ENCODE measurements at regions of chr1 and their contacts with region 1.

Region 1: DNA sequence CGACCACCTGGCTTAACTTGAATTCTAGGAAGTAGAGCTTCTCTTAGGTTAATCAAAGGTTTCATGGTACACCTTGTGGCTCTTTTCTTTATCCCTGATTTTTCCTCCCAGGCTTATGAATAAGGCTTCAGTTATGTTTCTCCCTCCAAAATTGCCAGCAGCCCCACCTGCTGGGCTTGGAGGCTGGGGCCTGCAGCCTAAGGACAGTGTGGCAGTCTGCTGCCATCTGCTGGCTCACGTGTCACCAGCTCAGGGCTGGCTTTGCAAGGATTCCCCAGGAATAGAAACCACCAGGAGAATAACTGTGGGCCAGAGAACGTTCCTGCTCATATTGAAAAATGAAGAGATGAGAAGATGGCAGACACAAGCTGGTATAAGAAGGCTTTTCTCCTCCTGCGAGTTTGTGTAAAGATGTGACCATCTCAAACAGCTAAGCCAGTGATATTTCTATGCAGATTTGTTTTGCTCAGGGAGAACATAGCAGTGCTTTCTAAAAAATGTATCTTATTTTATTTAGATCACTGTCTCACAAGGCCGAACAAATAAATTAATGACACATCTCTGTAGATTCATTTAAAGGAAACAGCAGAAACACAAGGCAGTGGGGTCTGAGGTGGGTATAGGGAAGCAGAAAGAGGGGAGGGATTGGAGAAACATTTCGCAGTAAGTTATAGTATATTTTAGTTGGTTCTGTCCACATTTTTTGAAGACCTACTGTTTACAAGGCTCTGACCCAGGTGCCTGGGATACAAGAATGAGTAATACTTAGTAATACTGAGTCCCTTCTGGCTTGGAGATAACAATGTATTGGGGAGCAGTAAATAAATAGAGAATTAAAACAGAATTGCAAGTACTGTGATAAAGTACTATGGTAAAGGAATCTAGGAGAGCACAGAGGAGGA is 291.1 kb upstream of the SGIP1 start:
- DNase-seq: peak; percentile 89
- ATAC-seq: peak; percentile 41
- H3K4me3 Mint-ChIP-seq: no peak overlapping the region
- H3K27ac Mint-ChIP-seq: no peak overlapping the region
- H3K4me1 Mint-ChIP-seq: no peaks in the 10 kb centered on the region
- H3K27me3 Mint-ChIP-seq: peaks cover 5% of the 10 kb centered on the region

Region 2: DNA sequence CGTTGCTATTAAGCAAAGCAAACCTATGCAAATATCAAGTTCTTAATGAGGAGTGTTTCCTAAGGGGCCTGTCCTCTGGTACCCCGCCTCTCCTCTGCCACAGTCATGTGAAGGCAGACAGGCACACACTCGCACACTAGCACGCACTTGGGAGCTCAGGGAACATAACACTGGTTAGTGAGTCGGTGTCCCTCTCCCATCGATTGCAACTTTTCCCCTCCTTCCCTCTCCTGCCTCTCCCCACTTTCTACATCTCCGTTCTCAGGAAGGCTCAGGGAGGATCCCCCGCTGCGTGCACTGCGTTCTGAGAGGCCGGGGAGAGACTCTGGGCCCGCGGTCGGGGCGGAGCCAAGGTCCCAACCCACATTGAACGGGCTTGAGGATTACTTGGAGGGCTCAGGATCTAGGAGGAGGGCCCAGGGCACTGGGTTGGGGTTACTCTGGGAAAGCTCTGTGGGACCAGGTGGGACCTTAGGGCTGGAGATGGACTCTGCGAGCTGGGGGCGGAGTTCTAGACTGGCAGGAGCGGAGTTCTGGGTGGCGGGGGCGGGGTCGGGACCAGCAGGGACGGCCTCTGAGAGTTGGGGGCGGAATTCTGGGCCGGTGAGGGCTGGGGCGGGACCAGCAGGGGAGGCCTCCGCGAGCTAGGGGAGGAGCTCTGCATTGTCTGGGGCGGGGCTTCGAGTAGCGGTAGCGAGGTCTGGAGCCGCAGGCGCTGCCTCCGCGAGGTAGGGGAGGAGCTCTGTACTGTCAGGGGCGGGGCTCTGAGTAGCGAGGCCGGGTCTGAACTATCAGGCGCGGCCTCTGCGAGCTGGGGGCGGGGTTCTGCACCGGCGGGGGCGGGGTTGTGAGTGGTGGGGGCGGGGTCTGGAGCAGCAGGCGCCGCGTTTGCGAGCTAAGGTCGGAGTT is 823.0 kb before region 1 on chr1:
- CTCF ChIA-PET with region 1: no interaction called
- POLR2A ChIA-PET with region 1: no interaction called
- intact Hi-C with region 1: loop called in 1 of 2 experiments (anchors 5 kb)
- DNase-seq: peak; percentile 99
- ATAC-seq: peak; percentile 96
- H3K4me3 Mint-ChIP-seq: no peak overlapping the region
- H3K27ac Mint-ChIP-seq: peak overlapping the region; percentile 94
- H3K4me1 Mint-ChIP-seq: peaks cover 13% of the 10 kb centered on the region
- H3K27me3 Mint-ChIP-seq: no peaks in the 10 kb centered on the region

Region 3: GRCh38 chr1:66012106-66012784 is 230.7 kb before region 1 on chr1:
- CTCF ChIA-PET with region 1: interaction called, 10 read pairs
- POLR2A ChIA-PET with region 1: no interaction called
- intact Hi-C with region 1: no loop called
- DNase-seq: no peak
- ATAC-seq: no peak
- H3K4me3 Mint-ChIP-seq: no peak overlapping the region
- H3K27ac Mint-ChIP-seq: no peak overlapping the region
- H3K4me1 Mint-ChIP-seq: peaks cover 3% of the 10 kb centered on the region
- H3K27me3 Mint-ChIP-seq: no peaks in the 10 kb centered on the region

Region 4: DNA sequence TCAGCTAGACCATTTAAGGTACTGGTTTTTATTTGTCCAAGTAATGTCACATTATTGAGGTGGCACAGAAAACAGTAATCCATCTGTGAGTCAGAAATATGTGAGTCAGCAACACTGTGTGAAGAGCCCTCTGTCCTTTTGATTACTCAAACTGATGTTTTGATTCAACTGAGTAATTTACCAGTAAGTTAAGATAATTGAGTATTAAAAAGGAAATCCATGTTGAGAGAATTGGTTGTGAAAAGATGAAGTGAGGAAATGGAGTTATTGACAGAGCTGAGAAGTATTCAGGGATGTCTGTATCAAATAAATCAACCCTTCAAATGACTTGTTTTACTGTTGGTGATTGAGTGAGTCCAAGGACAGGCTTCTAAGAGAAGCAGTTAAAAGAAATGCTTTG is 11.7 kb before region 1 on chr1:
- CTCF ChIA-PET with region 1: interaction called, 46 read pairs
- POLR2A ChIA-PET with region 1: no interaction called
- intact Hi-C with region 1: loop called in 1 of 2 experiments (anchors 1 kb)
- DNase-seq: no peak
- ATAC-seq: peak; percentile 97
- H3K4me3 Mint-ChIP-seq: no peak overlapping the region
- H3K27ac Mint-ChIP-seq: no peak overlapping the region
- H3K4me1 Mint-ChIP-seq: peaks cover 15% of the 10 kb centered on the region
- H3K27me3 Mint-ChIP-seq: peaks cover 6% of the 10 kb centered on the region

Region 5: DNA sequence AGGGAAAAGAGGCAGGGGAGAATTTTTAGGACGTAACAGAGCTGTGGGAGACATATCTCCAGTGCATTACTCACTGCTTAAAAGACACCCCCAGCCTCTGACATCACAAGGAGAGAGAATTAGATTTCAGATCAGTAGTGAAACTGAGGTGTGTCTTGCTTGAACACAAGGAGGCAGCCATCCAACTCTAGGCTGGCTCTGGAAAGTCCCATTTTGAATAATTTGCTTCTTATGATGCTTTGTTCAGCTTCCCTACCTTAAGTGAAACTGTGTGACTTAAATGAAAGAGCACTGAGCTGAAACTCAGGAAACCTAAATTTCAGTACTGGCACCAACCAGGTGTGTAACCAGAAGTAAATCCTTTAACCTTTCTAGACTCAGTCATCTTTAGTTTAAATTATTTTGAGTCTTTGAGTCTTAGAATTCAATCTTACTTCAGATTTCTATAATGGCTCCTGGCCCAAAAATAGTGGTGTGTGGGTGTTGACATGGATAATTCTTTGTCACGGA is 39.5 kb after region 1 on chr1:
- CTCF ChIA-PET with region 1: interaction called, 18 read pairs
- POLR2A ChIA-PET with region 1: interaction called, 3 read pairs
- intact Hi-C with region 1: loop called (anchors 1 kb)
- DNase-seq: peak; percentile 82
- ATAC-seq: peak; percentile 80
- H3K4me3 Mint-ChIP-seq: peak overlapping the region; percentile 29
- H3K27ac Mint-ChIP-seq: peak overlapping the region; percentile 90
- H3K4me1 Mint-ChIP-seq: peaks cover 93% of the 10 kb centered on the region
- H3K27me3 Mint-ChIP-seq: no peaks in the 10 kb centered on the region

Region 6: GRCh38 chr1:66374561-66375111 is 131.7 kb after region 1 on chr1:
- CTCF ChIA-PET with region 1: interaction called, 7 read pairs
- POLR2A ChIA-PET with region 1: interaction called, 3 read pairs
- intact Hi-C with region 1: loop called in 1 of 2 experiments (anchors 1 kb)
- DNase-seq: peak; percentile 61
- ATAC-seq: peak; percentile 70
- H3K4me3 Mint-ChIP-seq: peak overlapping the region; percentile 69
- H3K27ac Mint-ChIP-seq: peak overlapping the region; percentile 97
- H3K4me1 Mint-ChIP-seq: peaks cover 75% of the 10 kb centered on the region
- H3K27me3 Mint-ChIP-seq: no peaks in the 10 kb centered on the region

Region 7: DNA sequence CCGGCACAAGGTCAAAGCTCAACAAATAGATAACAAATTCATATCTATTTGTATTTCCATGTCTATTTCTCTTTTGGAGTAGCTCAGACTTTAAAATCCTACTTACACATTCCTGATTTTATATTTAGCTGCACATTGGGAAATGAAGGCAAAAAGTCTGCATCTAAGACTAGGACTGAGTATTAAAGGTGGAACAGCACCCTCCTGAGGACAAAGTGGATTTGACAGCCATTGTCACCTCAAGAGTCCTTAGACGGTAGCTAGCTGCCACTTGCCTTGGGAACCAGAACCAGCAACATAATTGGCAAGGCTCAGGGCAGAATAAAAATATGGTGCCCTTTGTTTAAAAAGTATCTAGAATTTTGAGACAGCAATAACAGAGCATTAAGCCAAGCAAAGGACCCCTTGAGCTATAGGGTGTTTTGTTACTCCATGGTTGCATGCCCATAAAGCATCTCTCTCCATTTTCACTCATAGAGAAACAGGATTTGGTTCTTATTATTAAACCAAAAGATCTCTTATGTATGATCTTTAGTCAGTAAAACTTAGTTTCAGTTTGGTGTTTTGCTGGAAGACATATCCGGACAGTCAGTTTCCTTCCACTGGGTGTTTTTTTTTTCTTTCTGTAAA is 261.1 kb after region 1 on chr1:
- CTCF ChIA-PET with region 1: interaction called, 14 read pairs
- POLR2A ChIA-PET with region 1: no interaction called
- intact Hi-C with region 1: loop called in 1 of 2 experiments (anchors 2 kb)
- DNase-seq: peak; percentile 65
- ATAC-seq: no peak
- H3K4me3 Mint-ChIP-seq: no peak overlapping the region
- H3K27ac Mint-ChIP-seq: no peak overlapping the region
- H3K4me1 Mint-ChIP-seq: no peaks in the 10 kb centered on the region
- H3K27me3 Mint-ChIP-seq: peaks cover 14% of the 10 kb centered on the region